Dorsolateral prefrontal cortex (tissue), 120 donors: ENCODE measurements at regions of chrX and their contacts with region 1.

Region 1: GRCh38 chrX:14029425-14030173 is at the start of gene GEMIN8:
- DNase-seq: peak; percentile 73 to 91 (median 83)
- H3K4me3 ChIP-seq: peak within 1 kb of the TSS; percentile 43 to 82 (median 70)
- H3K27ac ChIP-seq: peak within 1 kb of the TSS; percentile 27 to 95 (median 87)
- H3K27me3 ChIP-seq: peaks cover 0 to 47% (median 7%) of the 10 kb centered on the region in 45 donors
- CTCF ChIP-seq: peak in 14 of 56 donors; percentile 7 to 48 (median 21)
- total RNA-seq, gene GEMIN8: 9.8 to 42.5 (median 21.9) TPM

Region 2: DNA sequence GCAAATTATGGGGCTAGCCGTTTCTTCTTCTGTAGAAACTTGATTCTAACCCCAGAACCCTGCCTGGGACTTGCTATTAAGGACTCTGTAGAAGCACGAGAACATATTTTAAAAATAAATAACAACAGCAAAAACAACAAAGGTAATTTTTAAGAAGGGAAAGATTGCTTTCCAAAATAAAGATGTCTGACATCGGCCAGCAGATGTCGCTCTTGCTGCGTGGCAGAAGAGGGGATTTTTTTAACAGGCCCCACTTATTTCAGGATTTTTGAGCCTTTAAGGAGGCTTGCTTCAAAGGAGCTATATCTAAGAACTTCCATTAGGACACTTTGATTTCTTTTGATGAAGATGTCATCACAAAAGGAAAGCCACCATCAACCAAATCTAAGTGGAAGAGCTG is 523.0 kb before region 1 on chrX:
- intact Hi-C with region 1: loop called in 1 of 2 experiments (anchors 2 kb)
- DNase-seq: peak in 1 of 10 donors; percentile 7
- H3K4me3 ChIP-seq: no peak overlapping the region
- H3K27ac ChIP-seq: no peak overlapping the region
- H3K27me3 ChIP-seq: peaks cover 0 to 65% (median 8%) of the 10 kb centered on the region in 45 donors
- CTCF ChIP-seq: peak; percentile 55 to 90 (median 78)

Region 3: DNA sequence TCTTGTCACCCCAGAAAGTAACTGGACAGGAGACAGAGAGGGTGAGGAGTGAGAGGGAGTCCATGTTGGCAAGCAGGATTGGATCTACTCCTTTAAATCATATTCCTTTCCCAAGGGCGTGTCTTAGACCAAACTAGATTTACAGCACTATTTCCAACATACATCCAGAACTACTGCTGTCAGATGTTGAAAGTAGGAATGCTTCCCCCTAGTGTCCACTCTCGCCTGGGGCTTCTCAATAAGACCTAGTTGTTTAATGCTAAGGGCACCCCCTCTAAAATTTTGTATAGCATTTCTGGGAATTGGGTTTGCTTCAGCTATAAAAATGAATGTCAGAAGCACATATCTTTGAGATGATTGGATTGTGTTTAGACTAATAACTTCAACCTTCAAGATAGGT is 281.8 kb before region 1 on chrX:
- intact Hi-C with region 1: loop called (anchors 2 to 5 kb)
- DNase-seq: peak in 2 of 10 donors; percentile 63 to 65
- H3K4me3 ChIP-seq: no peak overlapping the region
- H3K27ac ChIP-seq: peak overlapping the region in 4 of 59 donors; percentile 7 to 53 (median 30)
- H3K27me3 ChIP-seq: peaks cover 0 to 29% (median 3%) of the 10 kb centered on the region in 45 donors
- CTCF ChIP-seq: peak in 54 of 56 donors; percentile 26 to 72 (median 53)

Region 4: DNA sequence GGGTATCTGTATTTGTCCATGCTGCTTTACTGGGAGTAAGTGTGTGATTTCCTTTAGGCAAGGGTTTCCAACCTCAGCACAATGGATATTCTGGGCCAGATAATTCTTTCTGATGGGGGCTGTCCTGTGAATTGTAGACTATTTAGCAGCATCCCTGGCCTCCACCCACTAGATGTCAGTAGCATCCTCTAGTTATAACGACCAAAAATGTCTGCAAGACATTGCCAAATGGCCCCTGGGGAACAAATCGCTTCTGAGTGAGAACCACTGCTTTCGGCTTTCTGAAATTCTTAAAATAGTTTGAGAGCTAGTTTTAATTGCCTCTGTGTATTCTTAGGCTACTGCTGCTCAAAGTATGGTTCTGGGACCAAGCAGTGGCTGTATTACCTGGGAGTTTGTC is 131.5 kb before region 1 on chrX:
- intact Hi-C with region 1: loop called (anchors 2 kb)
- DNase-seq: peak in 2 of 10 donors; percentile 62 to 66
- H3K4me3 ChIP-seq: peak overlapping the region in 1 of 59 donors; percentile 6
- H3K27ac ChIP-seq: peak overlapping the region in 58 of 59 donors; percentile 29 to 96 (median 88)
- H3K27me3 ChIP-seq: peaks cover 0 to 82% (median 9%) of the 10 kb centered on the region in 45 donors
- CTCF ChIP-seq: peak in 52 of 56 donors; percentile 15 to 76 (median 52)

Region 5: GRCh38 chrX:13966071-13966792 is 63.4 kb before region 1 on chrX:
- intact Hi-C with region 1: loop called in 1 of 2 experiments (anchors 2 kb)
- DNase-seq: no peak
- H3K4me3 ChIP-seq: peak overlapping the region in 4 of 59 donors; percentile 14 to 23 (median 16)
- H3K27ac ChIP-seq: peak overlapping the region in 58 of 59 donors; percentile 13 to 88 (median 78)
- H3K27me3 ChIP-seq: peaks cover 0 to 36% (median 4%) of the 10 kb centered on the region in 45 donors
- CTCF ChIP-seq: no peak

Region 6: GRCh38 chrX:14015294-14015693 is 14.3 kb before region 1 on chrX:
- intact Hi-C with region 1: no loop called
- DNase-seq: no peak
- H3K4me3 ChIP-seq: no peak overlapping the region
- H3K27ac ChIP-seq: peak overlapping the region in 22 of 59 donors; percentile 0 to 69 (median 23)
- H3K27me3 ChIP-seq: peaks cover 0 to 19% (median 0%) of the 10 kb centered on the region in 45 donors
- CTCF ChIP-seq: no peak

Region 7: DNA sequence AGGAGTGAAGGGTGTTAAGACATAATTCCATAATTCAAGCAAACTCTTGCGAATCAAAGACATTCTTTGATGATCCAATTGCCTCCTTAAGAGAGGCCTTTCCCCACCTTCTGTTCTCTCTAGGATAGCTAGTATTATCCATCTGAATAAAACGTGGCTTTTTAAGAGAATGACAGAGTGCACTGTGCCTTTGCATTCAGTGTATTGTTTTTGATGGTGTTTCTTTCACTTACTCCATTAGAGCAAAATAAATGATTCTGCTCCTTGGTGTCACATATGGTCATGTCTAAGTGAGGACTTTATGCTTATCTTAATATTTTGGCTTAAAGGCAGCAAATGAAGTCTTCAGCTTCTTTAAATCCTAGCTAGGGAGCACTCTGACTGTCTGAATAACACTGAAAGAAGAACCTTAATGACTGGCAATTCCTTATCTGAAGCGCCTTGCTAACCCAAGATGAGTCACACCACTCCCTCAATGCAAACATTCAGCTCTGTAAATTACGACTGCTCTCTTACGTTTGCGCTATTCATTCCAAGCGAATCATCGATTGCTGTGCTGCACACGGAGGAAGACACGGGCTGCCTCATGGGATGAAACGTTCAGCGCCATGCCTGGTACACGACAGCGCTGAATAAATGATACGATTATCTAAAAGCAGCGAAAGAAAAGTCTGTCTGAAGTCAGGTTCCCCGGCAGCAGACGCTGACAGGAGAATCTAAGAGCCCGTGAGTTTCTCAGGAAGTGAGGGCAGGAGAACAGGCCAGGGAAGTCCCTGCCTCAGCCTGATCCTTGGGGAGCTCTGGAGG is 35.2 kb after region 1 on chrX:
- intact Hi-C with region 1: no loop called
- DNase-seq: no peak
- H3K4me3 ChIP-seq: no peak overlapping the region
- H3K27ac ChIP-seq: no peak overlapping the region
- H3K27me3 ChIP-seq: peaks cover 0 to 83% (median 25%) of the 10 kb centered on the region in 45 donors
- CTCF ChIP-seq: no peak